Endothelial cell of umbilical vein (primary cell): ENCODE measurements at regions of chr12 and their contacts with region 1.

Region 1: DNA sequence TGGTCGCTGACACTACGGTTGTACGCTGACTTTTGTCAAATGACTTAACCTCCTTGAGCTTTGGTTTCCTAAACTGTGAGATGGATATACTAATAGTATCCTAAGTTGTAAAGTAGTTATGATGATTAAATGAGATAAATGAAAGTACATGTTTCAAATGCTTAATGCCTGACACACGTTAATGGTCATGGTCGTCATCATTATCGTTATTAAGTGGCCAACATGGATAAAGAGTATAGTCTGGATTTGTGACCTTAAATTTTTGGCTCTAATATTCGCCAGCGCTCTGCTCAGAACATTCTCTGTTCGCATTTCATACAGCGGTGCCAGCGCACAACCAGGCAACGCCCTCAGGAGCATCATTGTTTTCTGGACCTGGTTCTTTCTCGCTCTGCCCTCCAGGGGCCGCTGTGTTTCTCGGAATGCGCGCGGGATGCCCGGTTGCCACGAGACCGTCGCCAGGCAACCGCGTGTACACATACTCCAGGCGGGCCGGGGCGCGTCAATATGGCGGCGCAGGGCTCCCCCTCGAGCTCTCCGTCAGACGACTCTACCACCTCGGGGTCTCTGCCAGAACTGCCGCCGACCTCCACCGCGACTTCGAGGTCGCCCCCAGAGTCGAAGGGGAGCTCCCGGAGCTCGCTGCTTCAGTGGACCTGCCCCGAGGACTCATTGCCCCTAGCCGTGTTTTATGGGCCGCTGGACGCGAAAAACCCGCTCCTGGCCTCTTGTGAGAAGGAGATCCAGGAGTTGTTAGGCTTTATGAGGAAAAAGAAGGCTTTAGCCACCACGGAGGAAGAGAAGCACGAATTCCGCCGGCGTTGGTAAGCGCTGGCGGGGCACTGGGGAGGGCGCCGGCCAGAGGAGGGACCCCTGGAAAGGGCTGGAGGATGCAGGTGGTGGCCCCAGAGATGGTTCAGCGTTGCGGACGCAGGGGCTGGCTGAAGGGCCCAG is at the start of gene CFAP54:
- DNase-seq: peak; percentile 96
- H3K4me3 ChIP-seq: peak within 1 kb of the TSS; percentile 30 to 66 (median 53)
- H3K27ac ChIP-seq: peak within 1 kb of the TSS; percentile 88
- H3K4me1 ChIP-seq: peaks cover 57% of the 10 kb centered on the region
- H3K27me3 ChIP-seq: no peaks in the 10 kb centered on the region
- CTCF ChIP-seq: peak; percentile 92
- POLR2A ChIP-seq: no peak
- total RNA-seq, gene CFAP54: 21.5 and 26.9 TPM in 2 replicates

Region 2: GRCh38 chr12:96416033-96416801 is 73.2 kb before region 1 on chr12:
- CTCF ChIA-PET with region 1: no interaction called
- POLR2A ChIA-PET with region 1: no interaction called
- dilution Hi-C with region 1: no loop called
- intact Hi-C with region 1: loop called (anchors 1 kb)
- DNase-seq: peak; percentile 33
- H3K4me3 ChIP-seq: no peak overlapping the region
- H3K27ac ChIP-seq: no peak overlapping the region
- H3K4me1 ChIP-seq: peaks cover 43% of the 10 kb centered on the region
- H3K27me3 ChIP-seq: no peaks in the 10 kb centered on the region
- CTCF ChIP-seq: no peak
- POLR2A ChIP-seq: no peak

Region 3: GRCh38 chr12:96427269-96427729 is 62.1 kb before region 1 on chr12:
- CTCF ChIA-PET with region 1: no interaction called
- POLR2A ChIA-PET with region 1: interaction called, 3 read pairs
- dilution Hi-C with region 1: no loop called
- intact Hi-C with region 1: loop called (anchors 1 kb)
- DNase-seq: peak; percentile 99
- H3K4me3 ChIP-seq: peak overlapping the region in 2 of 3 experiments; percentile 3 to 47
- H3K27ac ChIP-seq: peak overlapping the region; percentile 99
- H3K4me1 ChIP-seq: peaks cover 56% of the 10 kb centered on the region
- H3K27me3 ChIP-seq: no peaks in the 10 kb centered on the region
- CTCF ChIP-seq: no peak
- POLR2A ChIP-seq: no peak

Region 4: GRCh38 chr12:96466939-96467751 is 22.2 kb before region 1 on chr12:
- CTCF ChIA-PET with region 1: interaction called, 4 read pairs
- POLR2A ChIA-PET with region 1: no interaction called
- dilution Hi-C with region 1: no loop called
- intact Hi-C with region 1: loop called (anchors 2 kb)
- DNase-seq: peak; percentile 64
- H3K4me3 ChIP-seq: no peak overlapping the region
- H3K27ac ChIP-seq: peak overlapping the region; percentile 34
- H3K4me1 ChIP-seq: peaks cover 18% of the 10 kb centered on the region
- H3K27me3 ChIP-seq: no peaks in the 10 kb centered on the region
- CTCF ChIP-seq: no peak
- POLR2A ChIP-seq: no peak

Region 5: GRCh38 chr12:96510306-96510764 is 21.0 kb after region 1 on chr12:
- CTCF ChIA-PET with region 1: interaction called, 20 read pairs
- POLR2A ChIA-PET with region 1: no interaction called
- dilution Hi-C with region 1: no loop called
- intact Hi-C with region 1: loop called (anchors 1 kb)
- DNase-seq: peak; percentile 96
- H3K4me3 ChIP-seq: no peak overlapping the region
- H3K27ac ChIP-seq: peak overlapping the region; percentile 84
- H3K4me1 ChIP-seq: peaks cover 13% of the 10 kb centered on the region
- H3K27me3 ChIP-seq: no peaks in the 10 kb centered on the region
- CTCF ChIP-seq: no peak
- POLR2A ChIP-seq: peak; percentile 47